Heart left ventricle (tissue), 16 donors: ENCODE measurements at regions of chr14 and their contacts with region 1.

Region 1: DNA sequence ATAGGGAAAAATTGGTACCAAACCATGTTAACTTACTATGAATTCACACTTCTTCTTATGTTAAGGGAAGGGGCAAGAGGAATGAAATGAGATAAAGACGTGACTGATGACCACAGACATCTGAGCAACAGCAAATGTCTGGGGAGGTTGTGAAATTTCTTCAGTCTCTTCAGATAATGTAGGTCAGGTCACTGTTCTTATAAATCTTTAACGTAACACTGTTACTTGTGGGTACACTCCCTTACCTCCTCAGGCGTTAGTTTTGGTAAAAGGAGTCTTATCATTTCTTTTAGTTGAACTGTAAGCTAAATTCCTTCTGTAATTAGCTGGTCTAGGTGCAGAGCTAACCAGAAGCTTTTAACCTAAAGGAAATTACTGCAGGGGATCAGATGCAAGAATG is 405.0 kb upstream of the LRFN5 start:
- DNase-seq: no peak
- ATAC-seq: no peak
- H3K4me3 ChIP-seq: no peak overlapping the region
- H3K27ac ChIP-seq: no peak overlapping the region
- H3K4me1 ChIP-seq: no peaks in the 10 kb centered on the region
- H3K27me3 ChIP-seq: no peaks in the 10 kb centered on the region
- CTCF ChIP-seq: no peak
- POLR2A ChIP-seq: no peak

Region 2: DNA sequence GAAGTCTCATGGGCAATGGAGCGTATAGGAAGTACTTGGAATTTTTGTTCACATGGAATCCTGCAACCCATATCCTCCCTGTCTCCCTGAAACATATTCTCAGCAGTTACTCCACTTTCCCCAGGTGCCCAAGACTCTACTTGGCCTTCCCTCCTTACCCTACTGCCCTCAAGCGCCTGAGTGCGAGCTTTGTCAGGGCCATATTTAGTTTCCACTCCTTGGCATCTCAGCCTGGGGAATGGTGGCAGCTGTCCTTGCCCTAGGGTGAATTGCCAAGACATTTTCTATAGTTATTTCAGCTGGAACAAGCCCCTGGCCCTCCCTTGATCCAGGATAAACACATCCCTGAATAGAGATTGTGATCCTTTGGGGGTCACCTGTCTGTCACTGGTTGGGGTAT is 164.3 kb before region 1 on chr14:
- intact Hi-C with region 1: no loop called
- DNase-seq: no peak
- ATAC-seq: no peak
- H3K4me3 ChIP-seq: no peak overlapping the region
- H3K27ac ChIP-seq: no peak overlapping the region
- H3K4me1 ChIP-seq: no peaks in the 10 kb centered on the region
- H3K27me3 ChIP-seq: no peaks in the 10 kb centered on the region
- CTCF ChIP-seq: no peak
- POLR2A ChIP-seq: no peak

Region 3: GRCh38 chr14:41137741-41138140 is 64.0 kb before region 1 on chr14:
- intact Hi-C with region 1: loop called in 2 of 10 experiments (anchors 2 kb)
- DNase-seq: no peak
- ATAC-seq: no peak
- H3K4me3 ChIP-seq: no peak overlapping the region
- H3K27ac ChIP-seq: no peak overlapping the region
- H3K4me1 ChIP-seq: no peaks in the 10 kb centered on the region
- H3K27me3 ChIP-seq: no peaks in the 10 kb centered on the region
- CTCF ChIP-seq: no peak
- POLR2A ChIP-seq: no peak

Region 4: DNA sequence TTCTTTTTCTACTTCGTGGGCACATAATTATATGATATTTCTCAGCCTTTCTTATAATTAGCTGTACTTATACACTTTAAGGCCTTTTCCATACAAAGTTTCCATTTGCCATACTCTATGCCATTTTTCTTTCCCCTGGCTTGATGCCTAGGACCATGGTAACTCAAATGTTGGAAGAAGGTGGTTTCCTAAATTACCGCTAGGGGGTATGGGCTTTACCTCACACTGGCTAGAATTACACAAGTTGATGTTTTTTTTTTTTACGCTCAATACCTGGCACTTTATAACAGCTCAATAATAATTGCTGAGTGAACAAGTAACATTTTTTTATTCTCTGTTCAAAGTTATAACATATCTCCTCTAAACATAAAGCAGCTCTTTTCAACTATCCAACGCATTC is 98.2 kb after region 1 on chr14:
- intact Hi-C with region 1: no loop called
- DNase-seq: no peak
- ATAC-seq: no peak
- H3K4me3 ChIP-seq: no peak overlapping the region
- H3K27ac ChIP-seq: no peak overlapping the region
- H3K4me1 ChIP-seq: no peaks in the 10 kb centered on the region
- H3K27me3 ChIP-seq: no peaks in the 10 kb centered on the region
- CTCF ChIP-seq: no peak
- POLR2A ChIP-seq: no peak